ENCODE measurements at regions of chr20 and their contacts with region 1.

Region 1: DNA sequence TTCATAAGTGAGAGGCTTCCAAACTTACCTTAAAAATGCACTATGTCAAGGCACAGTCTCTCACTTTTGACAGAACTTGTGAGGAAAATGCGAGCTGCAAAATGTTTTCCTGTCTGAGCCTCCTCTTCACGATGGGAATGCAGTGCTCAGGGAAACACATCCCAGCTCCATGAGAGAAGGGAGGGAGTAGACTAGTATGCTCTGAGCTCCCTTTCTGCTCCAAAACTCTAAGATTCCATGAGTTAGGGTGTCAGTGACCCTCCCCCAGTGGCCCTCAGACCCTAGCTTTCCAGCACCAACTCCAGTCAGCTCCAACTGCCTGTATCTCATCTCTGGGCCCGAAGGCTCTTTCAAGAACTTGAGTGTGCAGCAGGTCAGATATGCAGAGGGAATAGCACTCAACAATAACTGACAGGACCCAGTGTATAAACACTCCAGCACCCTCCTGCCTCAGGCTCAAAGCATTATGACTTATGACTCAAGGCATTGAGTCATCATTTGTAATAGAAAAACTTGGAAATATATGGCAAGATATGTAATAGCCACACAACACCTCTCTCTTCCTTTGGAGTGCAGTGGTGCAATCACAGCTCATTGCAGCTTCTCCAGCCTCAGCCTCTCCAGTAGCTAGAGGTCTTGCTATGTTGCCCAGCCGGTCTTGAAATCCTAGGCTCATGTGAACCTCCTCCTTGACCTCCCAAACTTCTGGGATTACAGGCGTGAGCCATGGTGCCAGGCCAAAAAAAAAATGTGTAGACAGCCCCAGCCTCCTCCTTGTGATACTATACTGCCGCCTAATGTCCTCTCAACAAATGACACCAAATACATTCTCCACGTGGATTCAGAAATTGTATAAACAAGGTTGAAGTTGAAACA is 16.7 kb upstream of the ENTPD6 start:
- DNase-seq: peak; percentile 38
- H3K4me3 ChIP-seq: no peak overlapping the region
- H3K27ac ChIP-seq: peak overlapping the region; percentile 58
- H3K27me3 ChIP-seq: peaks cover 12% of the 10 kb centered on the region
- CTCF ChIP-seq: peak; percentile 82

Region 2: DNA sequence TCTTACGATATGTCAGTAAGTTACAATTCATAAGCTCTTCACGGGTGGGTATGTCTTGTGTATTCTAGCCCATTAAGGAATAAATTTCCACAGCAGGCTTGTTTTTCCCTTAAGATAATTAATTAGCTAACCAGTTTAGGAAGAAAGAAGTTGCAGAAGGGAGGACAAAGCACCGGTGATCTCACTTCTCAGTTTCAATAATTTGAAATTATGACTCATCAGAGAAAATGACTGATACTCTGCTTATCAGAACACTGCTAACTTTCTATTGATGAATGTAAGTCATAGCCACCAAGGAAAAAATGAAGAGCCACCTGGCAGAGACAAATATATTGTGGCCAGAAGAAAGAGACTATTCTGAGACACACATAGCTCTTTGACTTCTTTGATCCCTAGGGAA is 18.3 kb before region 1 on chr20:
- CTCF ChIA-PET with region 1: interaction called, 12 read pairs
- POLR2A ChIA-PET with region 1: no interaction called
- DNase-seq: no peak
- H3K4me3 ChIP-seq: no peak overlapping the region
- H3K27ac ChIP-seq: no peak overlapping the region
- H3K27me3 ChIP-seq: peaks cover 4% of the 10 kb centered on the region
- CTCF ChIP-seq: no peak

Region 3: GRCh38 chr20:25198663-25199365 is 20.0 kb after region 1 on chr20:
- CTCF ChIA-PET with region 1: interaction called, 10 read pairs
- POLR2A ChIA-PET with region 1: interaction called, 4 read pairs
- DNase-seq: no peak
- H3K4me3 ChIP-seq: no peak overlapping the region
- H3K27ac ChIP-seq: no peak overlapping the region
- H3K27me3 ChIP-seq: no peaks in the 10 kb centered on the region
- CTCF ChIP-seq: no peak

Region 4: GRCh38 chr20:25212242-25212641 is 33.4 kb after region 1 on chr20:
- CTCF ChIA-PET with region 1: no interaction called
- POLR2A ChIA-PET with region 1: no interaction called
- DNase-seq: no peak
- H3K4me3 ChIP-seq: no peak overlapping the region
- H3K27ac ChIP-seq: no peak overlapping the region
- H3K27me3 ChIP-seq: no peaks in the 10 kb centered on the region
- CTCF ChIP-seq: no peak

Measured in AG04450 (cell line).